Activated CD4-positive, alpha-beta memory T cell treated with anti-CD3 and anti-CD28 coated beads for 36 hours (primary cell): ENCODE measurements at regions of chr17 and their contacts with region 1.

Region 1: GRCh38 chr17:68457539-68458259 is 403 bp upstream of the WIPI1 start:
- DNase-seq: peak; percentile 98
- H3K4me3 Mint-ChIP-seq: peak overlapping the region; percentile 72
- H3K27ac Mint-ChIP-seq: peak overlapping the region; percentile 68
- H3K4me1 Mint-ChIP-seq: peaks cover 58% of the 10 kb centered on the region
- H3K27me3 Mint-ChIP-seq: no peaks in the 10 kb centered on the region

Region 2: GRCh38 chr17:67717624-67718329 is 739.9 kb before region 1 on chr17 and contains the start of gene NOL11:
- CTCF ChIA-PET with region 1: no interaction called
- POLR2A ChIA-PET with region 1: no interaction called
- intact Hi-C with region 1: loop called (anchors 2 kb)
- DNase-seq: peak; percentile 100
- H3K4me3 Mint-ChIP-seq: peak within 1 kb of the TSS; percentile 94
- H3K27ac Mint-ChIP-seq: peak within 1 kb of the TSS; percentile 93
- H3K4me1 Mint-ChIP-seq: peaks cover 22% of the 10 kb centered on the region
- H3K27me3 Mint-ChIP-seq: peaks cover 2% of the 10 kb centered on the region
- total RNA-seq, gene NOL11: 59.5 to 62.0 TPM

Region 3: GRCh38 chr17:68172461-68172954 is 285.2 kb before region 1 on chr17:
- CTCF ChIA-PET with region 1: interaction called, 12 read pairs
- POLR2A ChIA-PET with region 1: no interaction called
- intact Hi-C with region 1: no loop called
- DNase-seq: peak; percentile 83
- H3K4me3 Mint-ChIP-seq: no peak overlapping the region
- H3K27ac Mint-ChIP-seq: no peak overlapping the region
- H3K4me1 Mint-ChIP-seq: peaks cover 16% of the 10 kb centered on the region
- H3K27me3 Mint-ChIP-seq: no peaks in the 10 kb centered on the region

Region 4: DNA sequence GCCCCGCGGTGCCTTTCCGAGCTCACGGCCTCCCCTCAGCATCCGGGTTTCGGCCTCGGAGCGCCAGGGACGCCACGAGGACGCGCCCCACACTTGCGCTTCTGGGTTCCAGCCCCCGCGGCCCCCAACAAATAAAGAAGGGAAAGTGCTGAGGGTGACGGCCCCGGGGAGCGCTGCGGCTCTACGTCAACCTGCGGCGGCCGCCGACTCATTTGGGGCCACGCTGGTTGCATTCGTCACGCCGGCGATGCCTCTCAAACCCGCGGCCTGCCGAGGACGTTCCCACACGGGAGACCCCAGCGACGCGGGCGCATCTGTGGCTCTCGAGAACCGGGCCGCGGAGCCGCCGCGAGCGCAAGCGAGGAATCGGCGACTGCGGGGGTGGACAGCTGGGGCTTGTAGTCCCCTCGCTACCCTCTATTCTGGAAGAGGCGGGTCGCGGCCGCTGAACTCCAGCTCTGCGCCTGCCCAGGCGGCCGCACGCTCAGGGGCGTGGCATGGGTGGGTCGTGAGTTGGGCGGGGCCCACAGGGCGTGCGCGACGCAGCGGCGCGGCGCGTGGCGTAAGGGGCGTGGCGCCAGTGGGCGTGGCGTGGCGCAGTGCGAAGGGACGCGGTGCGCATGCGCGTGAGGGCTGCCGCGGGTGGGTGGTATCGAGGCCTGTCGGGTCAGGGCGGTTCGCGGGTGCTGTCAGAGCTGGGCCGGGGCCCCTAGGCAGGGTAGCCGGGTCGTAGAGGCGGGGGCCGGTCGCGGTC is 210.1 kb before region 1 on chr17 and contains the start of gene AMZ2:
- CTCF ChIA-PET with region 1: interaction called, 5 read pairs
- POLR2A ChIA-PET with region 1: interaction called, 64 read pairs
- intact Hi-C with region 1: loop called (anchors 2 kb)
- DNase-seq: peak; percentile 97
- H3K4me3 Mint-ChIP-seq: peak within 1 kb of the TSS; percentile 90
- H3K27ac Mint-ChIP-seq: peak within 1 kb of the TSS; percentile 99
- H3K4me1 Mint-ChIP-seq: peaks cover 48% of the 10 kb centered on the region
- H3K27me3 Mint-ChIP-seq: no peaks in the 10 kb centered on the region
- total RNA-seq, gene AMZ2: 134 to 146 TPM

Region 5: GRCh38 chr17:68346448-68346847 is 111.3 kb before region 1 on chr17:
- CTCF ChIA-PET with region 1: no interaction called
- POLR2A ChIA-PET with region 1: interaction called, 3 read pairs
- intact Hi-C with region 1: loop called (anchors 1 kb)
- DNase-seq: peak; percentile 89
- H3K4me3 Mint-ChIP-seq: peak overlapping the region; percentile 74
- H3K27ac Mint-ChIP-seq: peak overlapping the region; percentile 93
- H3K4me1 Mint-ChIP-seq: peaks cover 67% of the 10 kb centered on the region
- H3K27me3 Mint-ChIP-seq: no peaks in the 10 kb centered on the region

Region 6: GRCh38 chr17:68368387-68368786 is 89.3 kb before region 1 on chr17:
- CTCF ChIA-PET with region 1: no interaction called
- POLR2A ChIA-PET with region 1: no interaction called
- intact Hi-C with region 1: no loop called
- DNase-seq: no peak
- H3K4me3 Mint-ChIP-seq: no peak overlapping the region
- H3K27ac Mint-ChIP-seq: no peak overlapping the region
- H3K4me1 Mint-ChIP-seq: no peaks in the 10 kb centered on the region
- H3K27me3 Mint-ChIP-seq: no peaks in the 10 kb centered on the region

Region 7: GRCh38 chr17:68512247-68512982 is 54.7 kb after region 1 on chr17 and contains the start of gene PRKAR1A:
- CTCF ChIA-PET with region 1: no interaction called
- POLR2A ChIA-PET with region 1: no interaction called
- intact Hi-C with region 1: loop called (anchors 2 kb)
- DNase-seq: peak; percentile 95
- H3K4me3 Mint-ChIP-seq: peak within 1 kb of the TSS; percentile 98
- H3K27ac Mint-ChIP-seq: peak within 1 kb of the TSS; percentile 98
- H3K4me1 Mint-ChIP-seq: peaks cover 46% of the 10 kb centered on the region
- H3K27me3 Mint-ChIP-seq: no peaks in the 10 kb centered on the region
- total RNA-seq, gene PRKAR1A: 221 to 229 TPM